Natural killer cell (primary cell): ENCODE measurements at regions of chr10 and their contacts with region 1.

Region 1: DNA sequence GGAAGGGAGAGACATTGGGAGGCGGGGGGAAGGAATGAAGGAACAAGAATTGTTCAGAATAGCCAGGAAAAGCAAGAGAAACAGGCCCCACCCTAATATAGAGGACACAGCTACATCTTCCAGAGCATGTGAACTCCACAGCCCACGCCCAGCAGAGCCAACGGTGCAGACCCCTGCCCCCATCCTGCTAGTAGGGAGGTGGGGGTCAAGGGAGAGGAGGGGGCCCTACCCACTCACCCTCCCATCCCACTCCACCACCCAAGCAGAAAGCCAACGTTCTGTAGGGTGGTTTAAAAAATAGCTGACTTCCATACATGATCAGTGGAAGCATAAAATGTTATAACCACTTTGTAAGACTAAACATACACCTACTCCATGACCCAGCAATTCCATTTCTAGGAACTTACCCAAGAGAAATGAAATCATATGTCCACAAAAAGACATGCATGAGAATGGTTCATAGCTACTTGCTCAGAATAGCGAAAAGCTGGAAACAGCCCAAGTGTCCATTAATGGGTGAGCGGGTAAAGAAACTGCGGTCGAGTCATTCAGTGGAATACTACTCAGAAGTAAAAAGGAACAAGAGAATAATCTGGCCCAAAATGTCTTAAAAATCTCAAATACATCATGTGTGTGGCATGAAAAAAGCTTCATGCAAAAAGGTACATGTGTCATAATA is 31.8 kb downstream of the CTBP2 start:
- DNase-seq: no peak
- ATAC-seq: no peak
- H3K4me3 ChIP-seq: no peak overlapping the region
- H3K4me3 Mint-ChIP-seq: peak overlapping the region; percentile 41
- H3K27ac ChIP-seq: no peak overlapping the region
- H3K27ac Mint-ChIP-seq: peak overlapping the region; percentile 90 to 91
- H3K4me1 ChIP-seq: peaks cover 55% of the 10 kb centered on the region
- H3K4me1 Mint-ChIP-seq: peaks cover 85 to 89% of the 10 kb centered on the region in 2 donors
- H3K27me3 ChIP-seq: no peaks in the 10 kb centered on the region
- H3K27me3 Mint-ChIP-seq: no peaks in the 10 kb centered on the region
- CTCF ChIP-seq: no peak

Region 2: DNA sequence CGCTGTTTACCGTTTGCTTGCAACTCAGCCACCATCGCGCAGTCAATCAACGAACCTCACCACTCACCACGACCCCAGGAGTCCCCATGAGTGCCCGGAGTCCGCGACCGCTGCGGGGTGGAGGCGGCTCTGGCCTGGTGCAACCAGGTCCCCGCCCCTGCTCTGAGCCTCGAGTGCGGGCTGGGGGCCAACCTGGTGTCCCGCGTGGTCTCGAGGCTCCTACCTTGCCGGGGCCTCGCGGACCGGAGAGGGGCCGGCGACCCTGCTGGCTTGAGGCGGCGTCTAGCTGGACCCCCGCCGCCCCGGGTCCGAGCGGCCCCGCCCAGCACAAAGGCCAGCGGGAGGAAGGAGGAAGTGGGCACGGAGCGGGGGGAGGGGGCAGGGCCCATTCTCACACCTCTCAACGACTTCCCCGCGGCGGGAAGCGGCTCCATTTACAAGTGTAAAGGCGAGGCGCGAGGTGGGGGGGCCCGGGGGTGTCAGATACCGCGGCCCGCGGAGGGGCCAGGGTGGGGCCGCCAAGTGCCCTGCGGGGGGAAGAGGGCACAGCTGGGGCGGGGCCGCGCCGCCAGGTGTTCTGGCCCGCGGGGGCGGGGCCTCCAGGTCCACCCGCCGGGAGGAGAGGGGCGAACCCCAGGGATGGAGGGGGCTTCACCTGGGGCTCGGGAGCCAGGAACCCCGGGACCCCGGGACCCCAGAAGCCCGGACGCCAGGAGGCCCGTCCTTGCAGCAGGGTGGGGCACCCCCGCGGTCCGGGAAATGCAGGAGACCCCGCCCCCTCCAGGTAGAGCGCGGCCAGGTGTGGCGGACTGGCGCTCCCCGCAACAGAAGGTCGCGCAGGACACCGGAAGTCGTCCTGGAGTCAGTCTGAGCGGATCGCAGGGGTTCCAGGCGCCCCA is 23.3 kb after region 1 on chr10:
- intact Hi-C with region 1: loop called (anchors 2 kb)
- DNase-seq: peak; percentile 23 to 76
- ATAC-seq: peak; percentile 63 to 82 (median 77)
- H3K4me3 ChIP-seq: peak overlapping the region; percentile 20
- H3K4me3 Mint-ChIP-seq: peak overlapping the region; percentile 82
- H3K27ac ChIP-seq: peak overlapping the region; percentile 56
- H3K27ac Mint-ChIP-seq: peak overlapping the region; percentile 97 to 98
- H3K4me1 ChIP-seq: peaks cover 81% of the 10 kb centered on the region
- H3K4me1 Mint-ChIP-seq: peaks cover 92 to 93% of the 10 kb centered on the region in 2 donors
- H3K27me3 ChIP-seq: no peaks in the 10 kb centered on the region
- H3K27me3 Mint-ChIP-seq: no peaks in the 10 kb centered on the region
- CTCF ChIP-seq: no peak